ENCODE measurements at regions of chr17 and their contacts with region 1.

Region 1: GRCh38 chr17:2309338-2310154 is 5.8 kb downstream of the SRR start:
- DNase-seq: no peak
- ATAC-seq: no peak
- H3K4me3 ChIP-seq: no peak overlapping the region
- H3K4me3 Mint-ChIP-seq: no peak overlapping the region
- H3K27ac ChIP-seq: no peak overlapping the region
- H3K27ac Mint-ChIP-seq: no peak overlapping the region
- H3K4me1 ChIP-seq: no peaks in the 10 kb centered on the region
- H3K4me1 Mint-ChIP-seq: peaks cover 5% of the 10 kb centered on the region
- H3K27me3 ChIP-seq: no peaks in the 10 kb centered on the region
- H3K27me3 Mint-ChIP-seq: no peaks in the 10 kb centered on the region
- CTCF ChIP-seq: no peak

Region 2: DNA sequence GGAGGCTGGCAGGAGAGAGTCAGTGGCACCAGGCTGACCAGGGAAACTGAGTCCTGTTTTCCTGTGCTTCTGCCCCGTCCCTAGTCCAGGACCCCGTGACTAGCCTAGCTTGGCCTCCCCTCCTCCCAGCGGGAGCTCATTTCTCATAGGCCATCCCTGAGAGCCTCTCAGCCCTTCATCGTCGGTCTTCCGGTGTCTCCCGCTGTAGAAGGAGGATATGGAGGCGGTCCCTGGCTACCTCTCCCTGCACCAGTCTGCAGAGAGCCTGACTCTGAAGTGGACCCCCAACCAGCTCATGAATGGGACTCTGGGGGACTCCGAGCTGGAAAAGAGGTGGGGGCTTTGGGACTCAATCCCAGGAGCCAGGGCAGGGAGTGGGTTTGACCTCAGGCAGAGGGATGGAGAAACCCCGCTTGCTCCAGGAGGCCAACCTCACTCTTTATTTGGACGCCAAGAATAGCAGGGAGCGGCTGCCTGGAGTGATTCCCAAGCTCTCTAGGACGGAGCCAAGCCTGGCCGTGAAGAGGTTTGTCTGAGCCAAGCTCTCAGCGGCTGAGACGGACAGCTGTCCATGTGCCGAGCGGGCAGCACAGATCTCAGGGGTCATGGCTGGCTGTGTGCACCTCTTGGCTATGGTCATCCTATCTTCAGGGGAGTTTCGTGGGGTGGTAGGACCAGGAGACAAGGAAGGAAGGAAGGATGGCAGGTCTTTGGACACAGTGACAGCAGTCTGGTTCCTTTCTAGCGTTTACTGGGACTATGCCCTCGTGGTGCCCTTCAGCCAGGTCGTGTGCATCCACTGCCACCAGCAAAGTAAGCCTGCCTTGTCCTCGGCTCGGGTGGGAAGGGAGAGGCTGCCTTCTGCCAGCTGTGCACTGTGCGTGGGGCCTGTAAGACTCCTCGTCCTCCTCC is 54.6 kb after region 1 on chr17:
- CTCF ChIA-PET with region 1: no interaction called
- POLR2A ChIA-PET with region 1: interaction called, 11 read pairs
- intact Hi-C with region 1: no loop called
- DNase-seq: no peak
- ATAC-seq: no peak
- H3K4me3 ChIP-seq: no peak overlapping the region
- H3K4me3 Mint-ChIP-seq: no peak overlapping the region
- H3K27ac ChIP-seq: no peak overlapping the region
- H3K27ac Mint-ChIP-seq: no peak overlapping the region
- H3K4me1 ChIP-seq: no peaks in the 10 kb centered on the region
- H3K4me1 Mint-ChIP-seq: no peaks in the 10 kb centered on the region
- H3K27me3 ChIP-seq: no peaks in the 10 kb centered on the region
- H3K27me3 Mint-ChIP-seq: no peaks in the 10 kb centered on the region
- CTCF ChIP-seq: no peak

Measured in B cell (primary cell).